ENCODE measurements at regions of chr17 and their contacts with region 1.

Region 1: DNA sequence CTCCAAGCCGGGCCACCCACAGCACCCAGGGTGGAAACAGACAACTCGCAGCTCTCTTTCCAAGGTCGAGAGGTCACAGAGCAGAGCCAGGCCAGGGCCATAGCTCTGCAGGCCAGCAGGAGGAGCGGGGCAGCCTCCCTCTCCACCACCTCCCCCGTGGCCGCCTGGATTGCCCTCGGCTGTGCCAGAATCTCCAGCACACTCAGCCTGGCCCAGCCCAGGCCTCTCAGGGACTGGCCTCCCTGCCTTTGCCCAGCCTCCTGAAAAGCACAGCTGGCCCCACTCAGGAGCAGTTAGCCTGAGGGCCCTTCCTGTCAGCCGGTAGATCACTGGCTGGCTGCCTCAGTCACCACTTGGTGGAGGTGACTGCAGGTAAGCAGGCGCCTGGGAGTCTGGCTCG is 85.8 kb upstream of the SEC14L1 start:
- DNase-seq: no peak
- ATAC-seq: peak; percentile 31
- H3K4me3 Mint-ChIP-seq: no peak overlapping the region
- H3K27ac Mint-ChIP-seq: no peak overlapping the region
- H3K4me1 Mint-ChIP-seq: peaks cover 13% of the 10 kb centered on the region
- H3K27me3 Mint-ChIP-seq: no peaks in the 10 kb centered on the region
- CTCF ChIP-seq: no peak

Region 2: GRCh38 chr17:76868176-76868668 is 186.7 kb before region 1 on chr17 and contains the start of gene MGAT5B:
- CTCF ChIA-PET with region 1: interaction called, 64 read pairs
- POLR2A ChIA-PET with region 1: no interaction called
- DNase-seq: peak; percentile 91
- ATAC-seq: peak; percentile 78
- H3K4me3 Mint-ChIP-seq: peak within 1 kb of the TSS; percentile 78
- H3K27ac Mint-ChIP-seq: no peak within 1 kb of the TSS
- H3K4me1 Mint-ChIP-seq: peaks cover 12% of the 10 kb centered on the region
- H3K27me3 Mint-ChIP-seq: peaks cover 29% of the 10 kb centered on the region
- CTCF ChIP-seq: peak; percentile 75
- total RNA-seq, gene MGAT5B: 11.5 to 12.0 TPM (median 11.6 TPM) in 3 replicates

Region 3: GRCh38 chr17:76887802-76888201 is 167.1 kb before region 1 on chr17:
- CTCF ChIA-PET with region 1: interaction called, 13 read pairs
- POLR2A ChIA-PET with region 1: no interaction called
- DNase-seq: no peak
- ATAC-seq: 0 out of 2 replicates have a peak, but pooled peaks have one; percentile 15
- H3K4me3 Mint-ChIP-seq: no peak overlapping the region
- H3K27ac Mint-ChIP-seq: peak overlapping the region; percentile 4; the same call in 1 of the 2 replicates
- H3K4me1 Mint-ChIP-seq: peaks cover 24% of the 10 kb centered on the region
- H3K27me3 Mint-ChIP-seq: no peaks in the 10 kb centered on the region
- CTCF ChIP-seq: no peak

Region 4: GRCh38 chr17:76994237-76994637 is 60.7 kb before region 1 on chr17:
- CTCF ChIA-PET with region 1: interaction called, 13 read pairs
- POLR2A ChIA-PET with region 1: interaction called, 4 read pairs
- DNase-seq: no peak
- ATAC-seq: no peak
- H3K4me3 Mint-ChIP-seq: no peak overlapping the region
- H3K27ac Mint-ChIP-seq: 0 out of 2 replicates have a peak overlapping the region, but pooled peaks have one; percentile 23
- H3K4me1 Mint-ChIP-seq: peaks cover 48% of the 10 kb centered on the region
- H3K27me3 Mint-ChIP-seq: no peaks in the 10 kb centered on the region
- CTCF ChIP-seq: no peak

Region 5: GRCh38 chr17:77019955-77020379 is 35.0 kb before region 1 on chr17:
- CTCF ChIA-PET with region 1: interaction called, 17 read pairs
- POLR2A ChIA-PET with region 1: no interaction called
- DNase-seq: no peak
- ATAC-seq: peak; percentile 43
- H3K4me3 Mint-ChIP-seq: no peak overlapping the region
- H3K27ac Mint-ChIP-seq: no peak overlapping the region
- H3K4me1 Mint-ChIP-seq: peaks cover 12% of the 10 kb centered on the region
- H3K27me3 Mint-ChIP-seq: no peaks in the 10 kb centered on the region; the same call in 1 of the 2 replicates
- CTCF ChIP-seq: no peak

Region 6: DNA sequence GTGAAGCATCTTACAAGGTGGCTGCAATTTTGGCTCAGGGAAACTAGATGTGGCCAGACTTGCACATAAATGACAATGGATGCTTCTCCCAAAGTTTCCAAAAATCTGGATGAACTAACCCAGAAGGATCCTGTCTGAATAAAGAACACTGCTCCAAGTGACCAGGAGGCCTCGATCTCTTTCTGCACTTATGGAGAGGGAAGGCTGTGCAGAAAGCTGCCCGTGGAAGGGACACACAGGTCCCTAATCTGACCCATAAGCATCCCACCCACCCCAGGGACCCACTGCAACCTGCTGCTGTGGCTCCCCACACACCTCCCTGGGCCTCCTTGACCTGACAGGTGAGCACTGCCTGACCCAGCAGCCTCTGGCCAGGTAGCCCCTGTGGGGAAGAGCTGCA is 11.2 kb after region 1 on chr17:
- CTCF ChIA-PET with region 1: interaction called, 71 read pairs
- POLR2A ChIA-PET with region 1: no interaction called
- DNase-seq: no peak
- ATAC-seq: no peak
- H3K4me3 Mint-ChIP-seq: no peak overlapping the region
- H3K27ac Mint-ChIP-seq: no peak overlapping the region
- H3K4me1 Mint-ChIP-seq: peaks cover 18% of the 10 kb centered on the region
- H3K27me3 Mint-ChIP-seq: no peaks in the 10 kb centered on the region
- CTCF ChIP-seq: no peak

Region 7: GRCh38 chr17:77088455-77089123 is 33.7 kb after region 1 on chr17:
- CTCF ChIA-PET with region 1: interaction called, 25 read pairs
- POLR2A ChIA-PET with region 1: no interaction called
- DNase-seq: peak; percentile 92
- ATAC-seq: peak; percentile 88
- H3K4me3 Mint-ChIP-seq: peak overlapping the region; percentile 92
- H3K27ac Mint-ChIP-seq: peak overlapping the region; percentile 95
- H3K4me1 Mint-ChIP-seq: peaks cover 26% of the 10 kb centered on the region
- H3K27me3 Mint-ChIP-seq: no peaks in the 10 kb centered on the region
- CTCF ChIP-seq: no peak

Region 8: GRCh38 chr17:77120868-77121267 is 65.9 kb after region 1 on chr17:
- CTCF ChIA-PET with region 1: no interaction called
- POLR2A ChIA-PET with region 1: no interaction called
- DNase-seq: no peak
- ATAC-seq: no peak
- H3K4me3 Mint-ChIP-seq: no peak overlapping the region
- H3K27ac Mint-ChIP-seq: no peak overlapping the region
- H3K4me1 Mint-ChIP-seq: no peaks in the 10 kb centered on the region
- H3K27me3 Mint-ChIP-seq: no peaks in the 10 kb centered on the region
- CTCF ChIP-seq: no peak

Region 9: GRCh38 chr17:77140166-77140878 is 85.4 kb after region 1 on chr17:
- CTCF ChIA-PET with region 1: no interaction called
- POLR2A ChIA-PET with region 1: no interaction called
- DNase-seq: peak; percentile 100
- ATAC-seq: peak; percentile 96
- H3K4me3 Mint-ChIP-seq: peak overlapping the region; percentile 55
- H3K27ac Mint-ChIP-seq: peak overlapping the region; percentile 91
- H3K4me1 Mint-ChIP-seq: peaks cover 16% of the 10 kb centered on the region
- H3K27me3 Mint-ChIP-seq: no peaks in the 10 kb centered on the region; the same call in 1 of the 2 replicates
- CTCF ChIP-seq: no peak